Testis (tissue), 5 donors: ENCODE measurements at regions of chr5 and their contacts with region 1.

Region 1: DNA sequence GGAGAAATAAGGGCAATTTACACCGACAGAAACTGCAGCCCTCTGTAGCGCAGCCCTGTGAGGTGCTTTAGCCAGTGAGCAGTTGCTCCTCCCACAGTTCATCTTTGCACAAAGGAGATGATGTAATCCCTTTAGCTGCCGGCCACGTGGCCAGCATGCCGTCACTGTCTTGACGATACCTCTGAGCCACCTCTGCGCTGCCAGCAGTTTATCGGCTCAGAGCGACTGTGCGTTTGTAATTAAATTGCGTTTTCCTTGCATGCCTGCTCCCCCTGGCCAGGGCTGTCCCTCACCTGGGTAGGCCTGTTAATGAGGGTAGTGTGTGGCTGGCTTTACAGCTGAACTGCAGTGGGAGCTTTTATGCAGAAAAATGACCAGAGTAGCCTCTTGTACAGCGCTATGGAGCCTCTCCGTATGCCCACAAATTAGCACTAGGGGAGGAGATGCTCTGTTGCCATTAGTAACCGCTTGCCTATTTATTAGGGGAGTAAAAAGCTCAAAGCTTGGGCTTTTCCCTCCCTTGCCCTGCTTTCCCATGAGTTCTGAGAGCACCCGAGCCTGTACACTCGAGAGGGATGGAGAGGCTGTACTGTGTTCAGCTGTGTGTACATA is 107.0 kb downstream of the TRIO start:
- DNase-seq: peak; percentile 91
- H3K4me3 ChIP-seq: no peak overlapping the region
- H3K27ac ChIP-seq: peak overlapping the region in 1 of 2 donors; percentile 44
- H3K4me1 ChIP-seq: peaks cover 10% of the 10 kb centered on the region
- H3K27me3 ChIP-seq: no peaks in the 10 kb centered on the region
- CTCF ChIP-seq: no peak
- POLR2A ChIP-seq: no peak

Region 2: GRCh38 chr5:13994621-13995253 is 255.5 kb before region 1 on chr5:
- intact Hi-C with region 1: loop called (anchors 10 kb)
- DNase-seq: no peak
- H3K4me3 ChIP-seq: no peak overlapping the region
- H3K27ac ChIP-seq: no peak overlapping the region
- H3K4me1 ChIP-seq: no peaks in the 10 kb centered on the region
- H3K27me3 ChIP-seq: no peaks in the 10 kb centered on the region
- CTCF ChIP-seq: no peak
- POLR2A ChIP-seq: no peak